IMR-90 (cell line): ENCODE measurements at regions of chr7 and their contacts with region 1.

Region 1: GRCh38 chr7:30164567-30164966 is 29.8 kb downstream of the MTURN start:
- DNase-seq: peak; percentile 54
- ATAC-seq: peak; percentile 69
- H3K4me3 ChIP-seq: no peak overlapping the region
- H3K27ac ChIP-seq: no peak overlapping the region
- H3K4me1 ChIP-seq: peaks cover 5% of the 10 kb centered on the region
- H3K27me3 ChIP-seq: no peaks in the 10 kb centered on the region
- CTCF ChIP-seq: peak; percentile 71
- POLR2A ChIP-seq: no peak
- RAD21 ChIP-seq: peak; percentile 70

Region 2: DNA sequence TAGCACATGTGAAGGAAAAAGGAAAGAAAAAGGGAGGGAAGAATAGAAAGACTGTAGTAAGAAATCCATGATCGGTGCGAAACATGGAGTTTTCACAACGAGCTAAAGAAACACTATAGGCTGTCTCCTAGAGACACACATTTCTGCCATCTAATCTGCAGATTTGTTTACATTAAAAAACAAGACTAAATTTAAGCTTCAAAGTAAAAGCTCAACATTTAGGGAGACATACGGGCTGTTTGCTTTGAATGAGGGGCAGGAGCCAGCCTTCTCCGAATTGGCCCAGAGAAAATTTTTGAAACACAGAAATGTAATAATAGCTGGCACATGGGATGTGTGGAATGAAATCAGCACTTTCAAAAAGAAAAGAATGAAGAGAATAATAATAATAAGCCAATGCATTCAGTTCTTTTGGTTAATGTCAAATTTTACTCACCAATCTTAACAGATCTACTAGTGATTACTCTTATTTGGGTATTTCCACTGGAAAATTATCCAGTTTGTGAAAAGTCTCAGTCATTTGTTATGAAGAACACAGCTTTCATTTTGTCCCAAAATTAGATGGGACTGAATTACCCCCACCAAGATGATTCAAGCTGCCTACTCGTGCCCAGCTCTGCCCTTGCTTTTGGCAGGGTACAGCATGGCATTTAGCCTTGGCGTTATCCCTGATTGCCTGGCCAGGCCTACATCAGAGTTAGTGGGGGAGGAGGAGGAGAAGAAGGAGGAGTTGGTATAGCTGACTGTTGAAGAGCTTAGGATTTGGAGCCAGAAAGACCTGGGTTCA is 17.4 kb after region 1 on chr7:
- CTCF ChIA-PET with region 1: no interaction called
- POLR2A ChIA-PET with region 1: no interaction called
- dilution Hi-C with region 1: no loop called
- in situ Hi-C with region 1: no loop called
- intact Hi-C with region 1: no loop called
- DNase-seq: no peak
- ATAC-seq: no peak
- H3K4me3 ChIP-seq: no peak overlapping the region
- H3K27ac ChIP-seq: no peak overlapping the region
- H3K4me1 ChIP-seq: no peaks in the 10 kb centered on the region
- H3K27me3 ChIP-seq: no peaks in the 10 kb centered on the region
- CTCF ChIP-seq: no peak
- POLR2A ChIP-seq: no peak
- RAD21 ChIP-seq: no peak

Region 3: DNA sequence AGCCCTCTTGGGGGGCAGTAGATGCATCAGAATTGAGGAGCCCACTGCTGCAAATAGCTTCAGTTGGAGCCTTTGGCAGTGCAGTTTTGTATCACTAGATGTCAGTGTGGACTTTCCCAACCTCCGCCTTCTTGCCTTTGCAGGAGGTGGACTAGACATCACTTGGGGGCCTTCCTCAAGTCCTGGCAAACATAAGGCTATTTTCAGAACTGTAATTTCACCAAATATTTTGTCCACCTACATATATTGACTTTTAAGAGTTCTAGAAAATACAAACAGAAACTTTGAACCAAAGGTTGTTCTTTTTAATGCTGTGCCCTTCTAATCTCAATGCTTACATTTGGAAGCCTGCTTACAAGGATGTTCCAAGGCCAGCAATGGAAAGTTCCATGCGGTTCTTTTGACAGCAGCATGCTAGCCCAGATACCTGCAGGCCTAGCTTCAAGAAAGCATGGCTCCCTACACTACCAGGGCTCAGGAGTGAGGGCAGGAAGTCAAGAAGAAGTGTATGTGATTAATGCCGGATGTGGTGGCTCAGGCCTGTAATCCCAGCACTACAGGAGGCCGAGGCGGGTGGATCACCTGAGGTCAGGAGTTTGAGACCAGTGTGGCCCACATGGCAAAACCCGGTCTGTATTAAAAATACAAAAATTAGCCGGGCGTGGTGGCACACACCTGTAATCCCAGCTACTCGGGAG is 111.8 kb after region 1 on chr7:
- CTCF ChIA-PET with region 1: interaction called, 4 read pairs
- POLR2A ChIA-PET with region 1: no interaction called
- dilution Hi-C with region 1: no loop called
- in situ Hi-C with region 1: loop called (anchors 10 kb)
- intact Hi-C with region 1: loop called (anchors 1 kb)
- DNase-seq: peak; percentile 62
- ATAC-seq: peak; percentile 94
- H3K4me3 ChIP-seq: no peak overlapping the region
- H3K27ac ChIP-seq: no peak overlapping the region
- H3K4me1 ChIP-seq: no peaks in the 10 kb centered on the region
- H3K27me3 ChIP-seq: peaks cover 23% of the 10 kb centered on the region
- CTCF ChIP-seq: peak; percentile 76
- POLR2A ChIP-seq: no peak
- RAD21 ChIP-seq: peak; percentile 86

Region 4: DNA sequence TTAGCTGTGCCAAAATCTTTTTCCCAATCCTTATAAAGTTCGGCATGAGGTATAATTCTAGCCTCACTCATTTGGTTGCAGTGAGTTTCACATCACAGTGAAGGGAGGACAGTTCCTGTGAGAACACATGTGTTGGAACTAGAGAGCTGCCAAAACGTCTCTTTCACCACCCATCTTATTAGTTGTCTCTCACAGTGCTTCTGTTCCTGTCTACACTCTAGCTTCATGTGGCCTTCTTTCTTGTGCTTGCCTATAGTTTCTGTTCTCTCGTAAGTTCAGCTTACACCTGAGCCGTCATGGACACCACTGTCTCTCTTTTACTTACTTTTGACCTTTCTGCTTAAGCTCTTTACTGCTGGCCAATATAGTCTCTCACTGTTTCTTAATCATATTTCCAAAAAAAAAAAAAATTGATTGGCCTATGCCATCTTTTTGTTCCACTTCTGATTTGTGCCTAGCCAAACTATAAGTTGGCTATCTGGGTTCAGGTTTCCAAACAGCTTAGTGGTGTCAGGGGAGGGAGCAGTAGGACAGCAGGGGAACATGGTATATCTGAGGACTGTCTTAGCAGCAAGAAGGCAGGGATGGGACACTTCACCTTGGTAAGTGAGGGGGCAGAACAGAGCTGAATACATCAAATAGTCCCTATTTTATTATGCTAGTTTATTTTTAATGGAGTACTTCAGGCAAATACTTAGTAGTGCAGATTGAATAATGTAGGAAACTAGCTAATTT is 157.9 kb after region 1 on chr7:
- CTCF ChIA-PET with region 1: interaction called, 10 read pairs
- POLR2A ChIA-PET with region 1: no interaction called
- dilution Hi-C with region 1: no loop called
- in situ Hi-C with region 1: no loop called
- intact Hi-C with region 1: no loop called
- DNase-seq: no peak
- ATAC-seq: no peak
- H3K4me3 ChIP-seq: no peak overlapping the region
- H3K27ac ChIP-seq: no peak overlapping the region
- H3K4me1 ChIP-seq: no peaks in the 10 kb centered on the region
- H3K27me3 ChIP-seq: no peaks in the 10 kb centered on the region
- CTCF ChIP-seq: no peak
- POLR2A ChIP-seq: no peak
- RAD21 ChIP-seq: no peak

Region 5: DNA sequence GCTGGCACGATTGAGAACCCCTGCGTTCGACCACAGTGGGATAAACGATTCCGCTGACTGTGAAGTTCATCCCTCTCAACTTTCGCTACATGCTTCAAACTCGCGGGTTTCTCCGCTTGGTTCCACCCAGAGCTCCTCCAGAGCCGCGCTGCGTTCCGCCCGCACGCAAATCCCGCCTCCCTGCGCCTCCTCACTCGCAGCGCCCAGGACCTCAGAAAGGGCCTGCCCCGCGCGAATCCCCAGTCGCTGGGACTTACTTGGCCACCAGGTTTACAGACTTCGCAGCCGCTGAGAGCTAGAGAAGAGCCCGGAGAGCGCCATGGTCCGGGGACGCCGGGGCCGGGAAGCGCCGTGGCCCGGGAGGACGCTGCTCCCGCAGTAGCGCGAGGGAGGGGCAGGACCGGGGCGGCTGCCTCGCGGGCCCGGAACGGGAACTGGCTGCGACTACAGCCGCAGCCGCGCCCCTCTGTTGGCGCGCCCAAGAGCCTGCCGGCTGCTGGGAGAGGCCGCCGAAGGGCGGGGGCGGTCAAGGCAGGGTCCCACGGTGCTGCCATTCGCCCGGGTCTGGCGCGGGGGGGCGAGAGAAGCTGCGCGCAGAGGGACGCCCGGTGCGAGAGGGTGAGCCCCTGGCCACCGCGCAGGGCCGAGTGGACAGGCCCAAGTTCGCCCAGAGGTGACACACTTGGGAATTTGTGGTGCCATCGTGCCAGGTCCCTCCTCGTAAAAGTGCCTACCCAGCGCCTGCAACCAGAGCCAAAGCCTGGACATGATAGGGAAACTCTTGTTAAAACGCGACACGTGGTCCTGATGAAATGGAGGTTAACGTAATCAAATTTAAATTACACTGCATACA is 314.0 kb after region 1 on chr7 and contains the start of gene NOD1:
- CTCF ChIA-PET with region 1: no interaction called
- POLR2A ChIA-PET with region 1: no interaction called
- dilution Hi-C with region 1: no loop called
- in situ Hi-C with region 1: no loop called
- intact Hi-C with region 1: loop called (anchors 5 kb)
- DNase-seq: peak; percentile 63
- ATAC-seq: peak; percentile 96
- H3K4me3 ChIP-seq: peak within 1 kb of the TSS; percentile 83
- H3K27ac ChIP-seq: peak within 1 kb of the TSS; percentile 88
- H3K4me1 ChIP-seq: peaks cover 7% of the 10 kb centered on the region
- H3K27me3 ChIP-seq: no peaks in the 10 kb centered on the region
- CTCF ChIP-seq: no peak
- POLR2A ChIP-seq: peak; percentile 77
- RAD21 ChIP-seq: no peak
- total RNA-seq, gene NOD1: 1.4 and 1.8 TPM in 2 replicates